ENCODE measurements at regions of chr11 and their contacts with region 1.

Region 1: DNA sequence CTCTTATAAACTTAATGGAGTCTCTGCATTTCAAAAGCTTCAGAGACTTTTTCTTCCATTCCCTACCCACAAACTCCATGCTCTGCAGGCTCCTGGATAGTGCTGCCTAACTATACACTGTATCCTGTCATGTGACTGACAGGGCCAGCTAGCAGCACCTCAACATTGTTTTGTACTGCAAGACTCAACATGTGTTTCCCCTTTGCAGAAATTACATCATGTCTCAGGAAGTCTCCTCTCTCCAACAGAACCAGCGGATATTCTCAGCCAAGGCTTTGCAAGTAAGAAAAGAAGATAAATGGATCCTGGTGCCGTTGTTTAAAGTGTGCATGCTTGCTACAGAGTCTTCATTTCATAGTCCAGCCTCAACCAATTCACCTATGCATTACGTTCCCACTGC is 164.0 kb upstream of the UBASH3B start:
- DNase-seq: no peak

Region 2: GRCh38 chr11:122367809-122368231 is 123.7 kb before region 1 on chr11:
- intact Hi-C with region 1: loop called (anchors 10 kb)
- DNase-seq: no peak

Region 3: GRCh38 chr11:122453586-122453985 is 37.9 kb before region 1 on chr11:
- intact Hi-C with region 1: no loop called
- DNase-seq: no peak